ENCODE measurements at regions of chr12 and their contacts with region 1.

Region 1: DNA sequence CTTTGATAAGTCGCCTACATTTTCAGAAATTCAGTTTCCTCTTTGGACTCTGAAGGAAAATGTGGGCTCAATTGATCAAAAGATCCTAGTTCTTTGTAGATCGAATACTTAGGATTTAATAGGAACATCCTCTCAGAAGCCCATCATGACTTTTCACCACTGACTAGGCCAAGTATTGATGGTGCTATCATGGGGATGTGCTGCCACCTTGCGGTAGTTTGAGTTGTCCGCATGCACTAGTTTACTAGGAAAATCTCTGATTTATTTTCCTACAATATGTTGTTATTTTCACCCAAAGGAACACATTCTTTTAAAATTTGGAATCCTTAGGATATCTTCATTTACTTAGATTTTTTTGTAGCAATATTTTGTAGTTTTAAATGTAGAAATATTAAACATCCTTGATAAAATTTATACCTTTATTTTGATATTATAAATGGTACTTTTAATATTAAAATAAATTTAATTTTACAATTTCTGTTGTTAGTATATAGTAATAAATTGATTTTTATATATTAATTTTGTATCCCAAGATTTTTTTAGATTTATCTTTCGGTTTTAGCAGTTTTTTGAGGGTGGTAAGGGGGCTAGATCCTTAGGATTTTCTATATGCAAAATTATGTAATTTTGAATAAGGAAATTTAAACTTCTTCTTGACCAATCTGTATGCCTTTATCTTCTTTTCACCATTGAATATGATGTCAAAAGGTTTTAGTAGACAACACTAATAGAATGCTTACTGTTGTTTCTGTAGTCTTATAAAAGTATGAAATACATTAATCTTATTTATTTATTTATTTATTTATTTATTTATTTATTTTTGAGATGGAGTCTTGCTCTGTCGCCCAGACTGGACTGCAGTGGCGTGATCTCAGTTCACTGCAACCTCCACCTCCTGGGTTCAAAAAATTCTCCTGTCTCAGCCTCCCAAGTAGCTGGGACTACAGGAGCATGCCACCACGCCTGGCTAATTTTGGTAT is 52.9 kb upstream of the OR9K2 start:
- DNase-seq: peak; percentile 83
- ATAC-seq: peak; percentile 60
- H3K4me3 ChIP-seq: no peak overlapping the region
- H3K4me3 Mint-ChIP-seq: no peak overlapping the region
- H3K27ac ChIP-seq: no peak overlapping the region
- H3K27ac Mint-ChIP-seq: no peak overlapping the region
- H3K4me1 ChIP-seq: peaks cover 0 to 10% of the 10 kb centered on the region in 2 donors
- H3K4me1 Mint-ChIP-seq: peaks cover 18% of the 10 kb centered on the region
- H3K27me3 ChIP-seq: peaks cover 0 to under 1% (median 0%) of the 10 kb centered on the region in 4 experiments
- H3K27me3 Mint-ChIP-seq: peaks cover 4% of the 10 kb centered on the region
- CTCF ChIP-seq: peak; percentile 96

Region 2: DNA sequence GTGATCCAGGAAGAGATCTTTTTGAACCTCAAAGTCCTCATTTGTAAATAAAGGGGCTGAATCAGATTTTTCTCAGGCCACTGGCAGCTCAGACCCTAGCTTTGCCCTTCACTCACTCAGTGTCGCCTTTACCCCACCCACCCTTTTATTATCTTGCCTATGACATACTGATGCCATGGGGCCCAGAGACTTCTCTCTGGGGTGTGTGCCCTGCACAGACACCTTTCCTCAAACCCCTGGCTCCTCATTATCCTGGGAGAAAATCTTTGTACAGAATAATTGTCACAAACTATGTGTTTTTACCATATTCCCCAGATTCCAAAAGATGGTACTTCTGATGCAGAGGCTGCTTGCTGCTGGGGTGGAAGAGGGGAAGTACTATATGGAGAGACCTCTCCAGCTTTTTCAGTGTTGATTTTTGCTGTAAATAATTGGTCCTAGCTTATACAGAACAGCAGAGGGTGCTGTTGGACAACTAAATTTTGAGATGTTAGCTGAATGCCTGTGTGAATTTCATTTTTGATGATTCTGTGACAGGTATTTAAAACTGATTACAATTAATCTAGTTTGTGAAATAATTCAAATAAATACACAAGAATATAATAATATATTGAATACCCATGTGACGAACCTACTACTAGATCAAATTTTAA is 371.3 kb before region 1 on chr12:
- CTCF ChIA-PET with region 1: interaction called, 26 read pairs
- POLR2A ChIA-PET with region 1: no interaction called
- intact Hi-C with region 1: loop called (anchors 1 kb)
- DNase-seq: peak; percentile 58
- ATAC-seq: no peak
- H3K4me3 ChIP-seq: no peak overlapping the region
- H3K4me3 Mint-ChIP-seq: no peak overlapping the region
- H3K27ac ChIP-seq: no peak overlapping the region
- H3K27ac Mint-ChIP-seq: no peak overlapping the region
- H3K4me1 ChIP-seq: no peaks in the 10 kb centered on the region
- H3K4me1 Mint-ChIP-seq: no peaks in the 10 kb centered on the region
- H3K27me3 ChIP-seq: no peaks in the 10 kb centered on the region
- H3K27me3 Mint-ChIP-seq: peaks cover 19% of the 10 kb centered on the region
- CTCF ChIP-seq: peak; percentile 78

Region 3: GRCh38 chr12:54853995-54854566 is 219.3 kb before region 1 on chr12 and contains the start of gene MUCL1:
- CTCF ChIA-PET with region 1: interaction called, 36 read pairs
- POLR2A ChIA-PET with region 1: no interaction called
- intact Hi-C with region 1: loop called (anchors 1 kb)
- DNase-seq: peak; percentile 68
- ATAC-seq: peak; percentile 81
- H3K4me3 ChIP-seq: no peak within 1 kb of the TSS
- H3K4me3 Mint-ChIP-seq: no peak within 1 kb of the TSS
- H3K27ac ChIP-seq: no peak within 1 kb of the TSS
- H3K27ac Mint-ChIP-seq: no peak within 1 kb of the TSS
- H3K4me1 ChIP-seq: no peaks in the 10 kb centered on the region
- H3K4me1 Mint-ChIP-seq: no peaks in the 10 kb centered on the region
- H3K27me3 ChIP-seq: no peaks in the 10 kb centered on the region
- H3K27me3 Mint-ChIP-seq: peaks cover 5% of the 10 kb centered on the region
- CTCF ChIP-seq: peak; percentile 98
- total RNA-seq, gene MUCL1: not detected in 2 replicates

Region 4: GRCh38 chr12:54984658-54985376 is 88.5 kb before region 1 on chr12 and contains the start of gene TESPA1:
- CTCF ChIA-PET with region 1: interaction called, 57 read pairs
- POLR2A ChIA-PET with region 1: no interaction called
- intact Hi-C with region 1: no loop called
- DNase-seq: peak; percentile 90
- ATAC-seq: peak; percentile 99
- H3K4me3 ChIP-seq: peak within 1 kb of the TSS; percentile 46 to 78 (median 59)
- H3K4me3 Mint-ChIP-seq: peak within 1 kb of the TSS; percentile 89
- H3K27ac ChIP-seq: peak within 1 kb of the TSS; percentile 94 to 95
- H3K27ac Mint-ChIP-seq: peak within 1 kb of the TSS; percentile 95
- H3K4me1 ChIP-seq: peaks cover 44 to 55% of the 10 kb centered on the region in 2 donors
- H3K4me1 Mint-ChIP-seq: peaks cover 73% of the 10 kb centered on the region
- H3K27me3 ChIP-seq: no peaks in the 10 kb centered on the region
- H3K27me3 Mint-ChIP-seq: no peaks in the 10 kb centered on the region
- CTCF ChIP-seq: no peak
- total RNA-seq, gene TESPA1: 17.8 and 19.0 TPM in 2 replicates

Region 5: GRCh38 chr12:55142669-55143565 is 69.6 kb after region 1 on chr12:
- CTCF ChIA-PET with region 1: interaction called, 16 read pairs
- POLR2A ChIA-PET with region 1: no interaction called
- intact Hi-C with region 1: loop called (anchors 1 kb)
- DNase-seq: peak; percentile 59
- ATAC-seq: no peak
- H3K4me3 ChIP-seq: no peak overlapping the region
- H3K4me3 Mint-ChIP-seq: no peak overlapping the region
- H3K27ac ChIP-seq: no peak overlapping the region
- H3K27ac Mint-ChIP-seq: no peak overlapping the region
- H3K4me1 ChIP-seq: no peaks in the 10 kb centered on the region
- H3K4me1 Mint-ChIP-seq: no peaks in the 10 kb centered on the region
- H3K27me3 ChIP-seq: no peaks in the 10 kb centered on the region
- H3K27me3 Mint-ChIP-seq: peaks cover 8% of the 10 kb centered on the region
- CTCF ChIP-seq: peak; percentile 93